CD8-positive, alpha-beta memory T cell (primary cell): ENCODE measurements at regions of chr13 and their contacts with region 1.

Region 1: DNA sequence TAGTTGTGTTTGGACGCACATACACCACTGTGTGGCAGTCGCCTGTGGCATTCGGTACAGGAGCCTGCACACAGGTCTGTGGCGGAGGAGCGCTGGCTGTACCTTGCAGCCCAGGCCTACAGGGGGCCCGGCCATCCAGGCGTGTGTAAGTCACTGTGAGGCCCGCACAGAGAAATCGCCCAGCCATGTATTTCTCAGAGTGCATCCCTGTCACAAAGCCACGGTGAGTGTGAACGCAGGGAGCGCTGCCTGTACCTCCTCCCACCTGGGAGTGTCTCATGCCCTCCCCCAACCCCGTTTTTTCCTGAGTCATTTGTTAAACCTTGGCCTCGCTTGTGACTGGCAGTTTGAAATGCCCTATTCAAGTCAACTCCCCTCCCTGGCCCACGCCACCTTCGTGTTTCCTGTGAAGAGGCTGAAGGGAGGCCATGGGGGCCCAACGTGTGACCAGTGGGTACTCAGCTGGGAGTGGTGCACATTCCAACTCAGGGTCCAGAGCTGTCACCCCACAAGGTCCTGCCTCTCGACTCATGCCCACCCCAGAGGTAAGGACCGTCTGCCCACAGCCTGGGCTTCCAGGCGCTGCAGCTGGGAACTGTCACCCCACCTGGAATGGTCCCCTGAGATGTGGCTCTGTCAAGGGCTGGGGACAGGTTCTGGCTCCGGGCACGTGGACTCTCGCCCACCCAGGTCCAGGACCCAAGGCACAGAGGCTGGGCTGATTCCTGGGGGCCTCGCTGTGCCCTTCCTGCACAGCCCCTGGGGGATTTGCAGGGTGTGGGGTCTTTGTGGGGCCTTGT is 11.6 kb upstream of the RASA3 start:
- DNase-seq: peak in 3 of 5 donors; percentile 43 to 73 (median 62)
- H3K4me3 ChIP-seq: peak overlapping the region; percentile 39
- H3K4me3 Mint-ChIP-seq: no peak overlapping the region
- H3K27ac ChIP-seq: peak overlapping the region; percentile 63
- H3K27ac Mint-ChIP-seq: peak overlapping the region in 4 of 8 donors; percentile 70 to 96 (median 93)
- H3K4me1 ChIP-seq: peaks cover 90% of the 10 kb centered on the region
- H3K4me1 Mint-ChIP-seq: peaks cover 14 to 41% (median 39%) of the 10 kb centered on the region in 3 donors
- H3K27me3 ChIP-seq: no peaks in the 10 kb centered on the region
- H3K27me3 Mint-ChIP-seq: peaks cover 0 to 2% of the 10 kb centered on the region in 2 donors

Region 2: GRCh38 chr13:113959198-113959597 is 184.8 kb before region 1 on chr13:
- CTCF ChIA-PET with region 1: no interaction called
- POLR2A ChIA-PET with region 1: no interaction called
- DNase-seq: no peak
- H3K4me3 ChIP-seq: no peak overlapping the region
- H3K4me3 Mint-ChIP-seq: peak overlapping the region in 2 of 7 donors; percentile 50 to 75
- H3K27ac ChIP-seq: no peak overlapping the region
- H3K27ac Mint-ChIP-seq: peak overlapping the region in 4 of 8 donors; percentile 47 to 70 (median 58)
- H3K4me1 ChIP-seq: no peaks in the 10 kb centered on the region
- H3K4me1 Mint-ChIP-seq: peaks cover 0 to 7% (median 3%) of the 10 kb centered on the region in 3 donors
- H3K27me3 ChIP-seq: no peaks in the 10 kb centered on the region
- H3K27me3 Mint-ChIP-seq: peaks cover 0 to 4% of the 10 kb centered on the region in 2 donors

Region 3: DNA sequence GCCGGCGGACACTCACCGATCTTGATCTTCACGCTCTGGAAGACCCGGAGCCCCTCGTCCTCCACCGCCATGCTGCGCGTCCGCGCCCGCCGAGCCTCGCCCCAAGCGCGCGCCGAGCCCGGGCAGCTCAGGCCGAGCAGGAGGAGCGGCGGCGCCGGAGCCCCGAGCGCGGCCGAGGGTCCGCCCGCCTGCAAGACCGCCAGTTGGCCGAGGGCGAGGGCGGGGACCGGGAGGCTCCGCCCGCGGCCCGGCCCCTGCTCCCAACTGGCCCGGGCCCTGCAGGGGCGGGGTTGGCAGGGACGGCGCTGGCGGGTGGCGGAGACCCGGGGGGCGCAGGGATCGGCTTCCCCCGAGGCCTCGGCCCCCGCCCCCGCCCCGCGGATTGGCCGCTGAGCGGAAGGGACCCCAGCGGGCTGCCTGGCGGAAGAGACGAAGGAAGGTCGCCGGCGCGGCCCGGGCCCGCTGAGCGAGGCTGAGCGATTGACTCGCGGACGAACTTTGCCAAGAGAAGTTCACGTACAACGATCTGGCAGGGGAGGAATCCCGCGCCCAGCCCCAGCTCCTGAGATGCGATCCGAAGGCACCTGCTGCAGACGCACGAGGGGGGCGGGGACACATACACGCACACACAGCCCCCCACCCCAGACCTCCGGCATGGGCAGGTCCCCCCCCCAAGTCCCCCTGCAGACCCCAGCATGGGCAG is 11.4 kb before region 1 on chr13 and contains the start of gene RASA3:
- CTCF ChIA-PET with region 1: interaction called, 10 read pairs
- POLR2A ChIA-PET with region 1: interaction called, 25 read pairs
- DNase-seq: peak; percentile 61 to 73 (median 69)
- H3K4me3 ChIP-seq: peak within 1 kb of the TSS; percentile 89
- H3K4me3 Mint-ChIP-seq: peak within 1 kb of the TSS; percentile 100
- H3K27ac ChIP-seq: peak within 1 kb of the TSS; percentile 85
- H3K27ac Mint-ChIP-seq: peak within 1 kb of the TSS; percentile 80 to 99 (median 98)
- H3K4me1 ChIP-seq: peaks cover 47% of the 10 kb centered on the region
- H3K4me1 Mint-ChIP-seq: peaks cover 46 to 72% (median 58%) of the 10 kb centered on the region in 3 donors
- H3K27me3 ChIP-seq: no peaks in the 10 kb centered on the region
- H3K27me3 Mint-ChIP-seq: peaks cover 0 to 4% of the 10 kb centered on the region in 2 donors
- total RNA-seq, gene RASA3: 26.4 to 27.1 TPM

Region 4: GRCh38 chr13:114155926-114156883 is 12.2 kb after region 1 on chr13:
- CTCF ChIA-PET with region 1: interaction called, 6 read pairs
- POLR2A ChIA-PET with region 1: interaction called, 11 read pairs
- DNase-seq: peak in 1 of 5 donors; percentile 49
- H3K4me3 ChIP-seq: no peak overlapping the region
- H3K4me3 Mint-ChIP-seq: peak overlapping the region; percentile 67 to 86 (median 80)
- H3K27ac ChIP-seq: no peak overlapping the region
- H3K27ac Mint-ChIP-seq: peak overlapping the region; percentile 85 to 97 (median 93)
- H3K4me1 ChIP-seq: peaks cover 78% of the 10 kb centered on the region
- H3K4me1 Mint-ChIP-seq: peaks cover 67 to 84% (median 80%) of the 10 kb centered on the region in 3 donors
- H3K27me3 ChIP-seq: no peaks in the 10 kb centered on the region
- H3K27me3 Mint-ChIP-seq: no peaks in the 10 kb centered on the region